Head of caudate nucleus (tissue), 42 donors: ENCODE measurements at regions of chr1 and their contacts with region 1.

Region 1: DNA sequence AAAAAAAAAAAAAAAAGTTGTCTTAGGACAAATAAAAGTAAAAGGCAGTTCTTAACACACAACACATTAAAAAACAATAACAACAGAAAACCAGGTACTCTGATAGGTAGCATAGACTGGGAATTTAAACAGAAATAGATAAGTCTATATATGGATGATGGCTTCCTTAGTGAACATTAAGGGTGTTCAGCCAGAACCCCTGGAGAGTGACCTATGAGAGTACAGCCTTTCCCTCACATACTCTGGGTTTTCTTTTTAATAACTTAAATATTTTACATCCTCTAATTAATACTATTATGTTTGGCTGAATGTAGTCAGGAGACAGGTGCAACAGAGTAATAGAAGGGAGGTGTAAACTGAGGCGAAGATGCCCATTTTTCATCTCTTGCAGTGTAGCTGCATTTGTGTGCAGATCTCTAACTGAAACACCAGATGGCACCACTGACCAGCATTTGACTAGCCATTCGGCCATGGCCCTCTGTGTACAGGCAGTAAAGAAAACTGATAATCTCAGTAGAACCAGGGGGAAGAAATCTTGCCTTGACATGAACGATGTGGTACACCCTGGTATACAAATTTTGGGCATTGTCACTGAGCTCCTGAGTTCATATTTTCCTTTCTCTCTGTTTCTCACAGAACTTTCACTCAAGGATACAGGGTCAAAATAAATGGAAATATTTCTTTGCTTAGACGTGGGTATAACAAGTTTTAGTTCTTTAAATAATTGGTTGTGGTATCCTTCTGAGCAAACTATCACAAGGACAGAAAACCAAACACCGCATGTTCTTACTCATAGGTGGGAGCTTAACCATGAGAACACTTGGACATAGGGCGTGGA is 7.6 kb downstream of the TTF2 start:
- DNase-seq: peak; percentile 40 to 86 (median 69)

Region 2: DNA sequence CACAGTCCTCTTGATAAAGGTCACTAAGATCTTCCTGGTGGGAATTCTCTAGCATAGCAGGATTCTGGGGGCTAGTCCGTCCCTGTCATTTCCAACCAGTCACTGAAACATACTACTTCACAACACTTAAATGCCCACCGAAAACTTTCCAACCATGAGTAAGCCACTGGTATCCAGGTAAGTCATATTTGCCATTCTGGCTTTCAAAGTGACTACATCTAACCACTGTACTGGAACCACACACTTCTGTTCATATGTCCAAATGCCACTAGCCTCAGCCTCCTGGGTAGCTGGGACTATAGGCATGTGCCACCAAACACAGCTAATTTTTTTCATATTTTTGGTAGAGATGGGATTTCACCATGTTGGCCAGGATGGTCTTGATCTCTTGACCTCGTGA is 1490.2 kb before region 1 on chr1:
- intact Hi-C with region 1: no loop called
- DNase-seq: no peak

Region 3: GRCh38 chr1:117128323-117129079 is 60.7 kb after region 1 on chr1:
- intact Hi-C with region 1: loop called (anchors 2 kb)
- DNase-seq: no peak

Region 4: GRCh38 chr1:117284399-117285215 is 216.9 kb after region 1 on chr1:
- intact Hi-C with region 1: loop called (anchors 5 kb)
- DNase-seq: peak in 15 of 42 donors; percentile 14 to 57 (median 30)